Right ventricle myocardium inferior (tissue), 1 donor: ENCODE measurements at regions of chr7 and their contacts with region 1.

Region 1: GRCh38 chr7:133207687-133208086 is 45.2 kb upstream of the EXOC4 start:
- DNase-seq: no peak
- ATAC-seq: no peak

Region 2: GRCh38 chr7:132102942-132103341 is 1104.7 kb before region 1 on chr7:
- intact Hi-C with region 1: loop called (anchors 10 kb)
- DNase-seq: no peak
- ATAC-seq: no peak

Region 3: GRCh38 chr7:133165001-133165400 is 42.7 kb before region 1 on chr7:
- intact Hi-C with region 1: no loop called
- DNase-seq: no peak
- ATAC-seq: no peak

Region 4: DNA sequence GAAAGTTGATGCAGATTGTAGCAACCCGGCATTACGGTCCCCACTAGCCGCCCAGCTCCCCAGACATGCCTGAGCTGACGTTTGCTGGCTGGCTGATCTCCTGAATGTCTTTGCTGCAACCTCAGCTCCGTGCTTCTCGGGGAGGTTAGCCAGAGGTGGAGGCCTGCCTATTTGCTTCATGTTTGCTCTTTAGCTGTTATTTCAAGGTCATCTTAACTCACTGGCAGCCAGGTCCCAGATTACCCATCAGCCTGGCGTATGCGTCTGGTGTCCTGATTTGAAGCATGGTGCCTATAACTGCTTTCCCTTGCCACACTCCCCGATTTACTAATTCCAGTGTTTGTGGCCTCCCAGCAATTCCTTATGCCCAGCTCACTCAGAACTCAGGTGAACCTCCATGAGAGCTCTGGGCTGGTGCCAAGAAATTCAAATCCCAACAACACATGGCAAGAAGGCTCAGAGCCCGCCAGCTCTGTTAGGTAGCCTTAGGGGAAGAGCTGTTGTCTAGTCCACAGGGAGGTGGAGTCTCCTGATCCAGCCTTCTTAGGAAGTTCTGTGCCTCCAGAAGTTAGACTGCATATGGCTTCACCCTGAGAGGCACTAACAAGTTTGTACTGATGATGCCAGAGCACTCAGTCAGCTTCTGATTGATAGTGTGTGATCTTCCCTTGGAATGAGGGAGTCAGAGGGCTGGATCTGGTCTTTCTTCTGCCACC is 24.5 kb before region 1 on chr7:
- intact Hi-C with region 1: no loop called
- DNase-seq: no peak
- ATAC-seq: no peak

Region 5: DNA sequence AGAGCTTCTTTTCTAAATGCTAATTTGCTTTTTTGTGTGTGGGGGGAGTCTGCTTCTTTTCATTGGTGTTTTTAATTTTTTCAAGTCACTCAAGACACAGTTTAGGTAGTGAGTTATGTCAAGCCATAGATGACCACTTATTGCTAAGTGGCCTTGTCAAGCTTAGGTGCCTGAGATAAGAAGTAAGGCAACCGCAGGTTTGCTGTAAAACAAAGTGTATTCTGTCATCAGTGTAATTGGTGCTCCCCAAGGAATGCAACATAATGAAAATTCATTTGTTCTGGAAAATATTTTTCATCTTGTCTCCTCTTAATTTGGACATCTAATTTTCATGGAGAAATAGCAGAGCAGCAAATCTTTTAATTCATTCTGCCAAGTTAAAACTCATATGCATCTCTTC is 294.8 kb after region 1 on chr7:
- intact Hi-C with region 1: no loop called
- DNase-seq: no peak
- ATAC-seq: no peak